Dorsolateral prefrontal cortex (tissue), 120 donors: ENCODE measurements at regions of chr16 and their contacts with region 1.

Region 1: GRCh38 chr16:12067714-12068401 is 91.3 kb downstream of the SNX29 start:
- DNase-seq: peak in 6 of 10 donors; percentile 19 to 79 (median 64)
- H3K4me3 ChIP-seq: no peak overlapping the region
- H3K27ac ChIP-seq: peak overlapping the region in 6 of 59 donors; percentile 3 to 40 (median 28)
- H3K27me3 ChIP-seq: no peaks in the 10 kb centered on the region
- CTCF ChIP-seq: peak; percentile 69 to 99 (median 95)

Region 2: DNA sequence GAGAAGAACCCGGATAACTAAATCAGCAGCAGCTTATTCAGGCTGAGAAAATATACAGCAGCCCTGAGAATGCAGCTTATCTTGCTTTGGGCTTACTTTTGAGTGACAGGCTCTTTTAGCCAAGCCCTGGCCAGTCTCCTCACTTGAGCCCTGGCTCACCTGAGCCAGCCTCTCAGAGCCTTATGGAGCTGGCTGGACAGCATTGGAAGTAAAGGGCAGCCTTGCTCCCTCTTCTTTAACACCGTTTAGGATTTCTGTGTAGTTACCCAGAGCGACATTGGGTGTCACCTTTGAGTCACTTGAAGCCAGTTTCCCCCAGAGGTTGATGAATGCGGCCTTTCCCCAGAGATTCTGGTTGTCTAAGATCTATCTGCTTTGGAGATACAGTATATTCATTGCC is 118.3 kb before region 1 on chr16:
- intact Hi-C with region 1: loop called (anchors 1 to 2 kb)
- DNase-seq: peak in 3 of 10 donors; percentile 11 to 42 (median 33)
- H3K4me3 ChIP-seq: no peak overlapping the region
- H3K27ac ChIP-seq: no peak overlapping the region
- H3K27me3 ChIP-seq: no peaks in the 10 kb centered on the region
- CTCF ChIP-seq: peak in 54 of 56 donors; percentile 33 to 82 (median 62)

Region 3: GRCh38 chr16:12203780-12204351 is 136.0 kb after region 1 on chr16:
- intact Hi-C with region 1: no loop called
- DNase-seq: peak in 3 of 10 donors; percentile 34 to 41 (median 38)
- H3K4me3 ChIP-seq: peak overlapping the region in 1 of 59 donors; percentile 2
- H3K27ac ChIP-seq: peak overlapping the region in 34 of 59 donors; percentile 2 to 77 (median 50)
- H3K27me3 ChIP-seq: no peaks in the 10 kb centered on the region
- CTCF ChIP-seq: no peak